HepG2 (cell line): ENCODE measurements at regions of chr12 and their contacts with region 1.

Region 1: DNA sequence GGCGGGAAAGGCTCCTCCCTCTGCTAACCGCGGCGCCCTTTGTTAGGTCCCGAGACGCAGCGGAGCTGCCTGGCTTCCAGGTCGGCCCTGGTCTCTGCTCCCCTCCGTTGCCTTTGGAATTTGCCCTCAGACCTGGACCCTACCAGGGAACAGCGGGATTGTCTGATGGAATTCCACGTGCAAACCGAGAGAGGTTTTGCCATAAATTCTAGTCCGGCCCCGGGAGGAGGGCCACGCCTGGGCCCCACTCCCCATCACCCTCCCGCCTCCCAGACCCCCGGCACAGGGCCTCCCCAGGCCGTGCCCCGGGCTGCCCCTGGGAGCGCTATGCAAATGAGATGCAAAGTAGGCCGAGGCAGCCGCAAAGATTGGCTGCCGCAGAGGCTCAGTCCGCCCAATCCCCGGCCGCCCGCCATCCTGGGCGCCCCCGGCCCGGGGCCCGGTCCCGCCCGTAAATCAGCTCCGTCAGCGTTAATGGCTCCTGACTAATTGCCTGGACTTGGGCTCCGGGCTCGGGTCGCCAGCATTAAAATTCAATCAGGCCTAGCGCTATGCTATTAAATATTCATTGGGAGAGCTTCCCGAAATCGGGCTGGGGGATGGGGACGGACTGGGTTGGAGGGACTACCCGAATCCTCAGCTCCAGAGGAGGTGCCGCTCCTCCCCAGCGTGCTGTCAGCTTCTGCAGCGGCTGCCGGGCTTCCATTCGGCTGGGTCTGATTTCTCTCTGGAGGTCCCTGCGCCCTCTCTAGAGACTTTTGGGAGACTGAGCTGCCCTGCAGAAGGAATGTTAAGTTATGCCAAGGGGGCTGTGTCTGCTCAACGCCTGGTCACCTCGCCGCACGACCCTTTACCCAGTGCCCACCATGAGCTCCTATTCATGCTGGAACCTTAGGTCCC is 15.7 kb upstream of the FIGNL2 start:
- DNase-seq: peak; percentile 35
- ATAC-seq: peak; percentile 82
- H3K4me3 ChIP-seq: peak overlapping the region; percentile 32 to 62 (median 52); a peak in 5 of 6 replicates
- H3K27ac ChIP-seq: no peak overlapping the region
- H3K4me1 ChIP-seq: peaks cover 63% of the 10 kb centered on the region
- H3K27me3 ChIP-seq: peaks cover 10 to 25% of the 10 kb centered on the region in 2 experiments; a peak in 3 of 5 replicates
- CTCF ChIP-seq: no peak
- EP300 ChIP-seq: no peak
- POLR2A ChIP-seq: no peak
- RAD21 ChIP-seq: no peak

Region 2: GRCh38 chr12:51846911-51847642 is 17.1 kb before region 1 on chr12:
- CTCF ChIA-PET with region 1: no interaction called
- POLR2A ChIA-PET with region 1: interaction called, 14 read pairs
- in situ Hi-C with region 1: no loop called
- intact Hi-C with region 1: no loop called
- DNase-seq: no peak
- ATAC-seq: peak; percentile 43
- H3K4me3 ChIP-seq: peak overlapping the region; percentile 71 to 82 (median 72)
- H3K27ac ChIP-seq: no peak overlapping the region
- H3K4me1 ChIP-seq: peaks cover 31% of the 10 kb centered on the region
- H3K27me3 ChIP-seq: peaks cover 0 to 9% of the 10 kb centered on the region in 2 experiments; a peak in 1 of 5 replicates
- CTCF ChIP-seq: no peak
- EP300 ChIP-seq: no peak
- POLR2A ChIP-seq: no peak
- RAD21 ChIP-seq: no peak